Ascending aorta (tissue), 2 donors: ENCODE measurements at regions of chr7 and their contacts with region 1.

Region 1: DNA sequence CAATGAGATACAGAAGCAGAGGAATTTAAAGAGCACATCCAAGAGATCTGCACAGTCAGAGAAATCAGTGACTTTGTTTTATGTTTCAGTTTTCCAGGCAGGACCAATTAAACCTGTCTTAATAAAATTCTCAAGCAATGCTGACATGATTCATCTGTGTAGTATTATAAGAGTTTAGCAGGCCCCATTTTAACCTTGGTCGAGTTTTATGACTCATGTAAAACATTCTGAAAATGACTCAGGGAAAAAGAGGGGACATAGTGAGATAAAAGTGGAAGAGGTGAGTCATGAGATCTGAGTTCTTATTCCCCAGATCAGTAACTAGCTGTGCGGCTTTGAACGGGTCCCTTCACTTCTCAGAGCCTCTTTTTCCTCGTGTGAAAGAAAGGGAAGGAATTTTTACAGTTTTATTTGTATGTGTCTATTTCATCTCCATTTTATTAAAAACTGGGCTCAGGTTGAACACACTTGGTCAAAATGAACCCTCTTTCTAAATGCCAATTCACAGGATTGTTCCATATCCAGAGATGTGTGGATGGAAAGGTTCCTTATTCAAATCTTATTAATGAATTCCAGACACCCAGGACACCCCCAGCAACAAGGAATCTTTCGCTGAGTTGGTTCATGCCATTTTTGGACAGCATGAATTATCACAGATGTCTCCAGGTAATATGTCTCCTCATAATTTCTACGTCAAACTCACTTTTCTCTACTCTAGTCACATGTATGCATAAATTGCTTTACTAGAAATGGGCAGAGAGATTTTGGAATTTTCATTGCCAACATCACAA is 143.2 kb downstream of the JAZF1 start:
- DNase-seq: no peak
- H3K4me3 ChIP-seq: no peak overlapping the region
- H3K27ac ChIP-seq: peak overlapping the region; percentile 56 to 72
- H3K4me1 ChIP-seq: peaks cover 13 to 26% of the 10 kb centered on the region in 2 donors
- H3K27me3 ChIP-seq: no peaks in the 10 kb centered on the region
- CTCF ChIP-seq: no peak

Region 2: DNA sequence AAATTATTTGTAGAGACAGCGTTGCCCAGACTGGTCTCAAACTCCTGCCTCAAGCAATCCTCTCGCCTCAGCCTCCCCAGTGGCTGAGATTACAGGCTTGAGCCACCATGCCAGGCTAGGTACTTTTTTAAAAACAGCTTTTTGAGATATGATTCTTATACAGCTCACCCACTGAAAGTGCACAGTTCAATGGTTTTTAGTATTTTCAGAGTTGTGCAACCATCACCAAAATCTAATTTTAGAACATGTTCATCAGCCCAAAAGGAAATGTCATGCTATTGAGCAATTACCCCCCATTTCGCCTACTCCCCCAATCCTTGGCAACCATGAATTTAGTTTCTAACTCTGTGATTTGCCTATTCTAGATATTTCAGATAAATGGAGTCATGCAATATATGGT is 721.1 kb before region 1 on chr7:
- intact Hi-C with region 1: no loop called
- DNase-seq: no peak
- H3K4me3 ChIP-seq: no peak overlapping the region
- H3K27ac ChIP-seq: no peak overlapping the region
- H3K4me1 ChIP-seq: no peaks in the 10 kb centered on the region
- H3K27me3 ChIP-seq: no peaks in the 10 kb centered on the region
- CTCF ChIP-seq: no peak

Region 3: GRCh38 chr7:27739909-27740448 is 297.4 kb before region 1 on chr7 and contains the start of gene TAX1BP1:
- intact Hi-C with region 1: loop called (anchors 5 kb)
- DNase-seq: peak; percentile 74 to 97
- H3K4me3 ChIP-seq: peak within 1 kb of the TSS; percentile 87 to 97
- H3K27ac ChIP-seq: peak within 1 kb of the TSS; percentile 99
- H3K4me1 ChIP-seq: peaks cover 5 to 20% of the 10 kb centered on the region in 2 donors
- H3K27me3 ChIP-seq: no peaks in the 10 kb centered on the region
- CTCF ChIP-seq: no peak
- total RNA-seq, gene TAX1BP1: 32.6 TPM

Region 4: DNA sequence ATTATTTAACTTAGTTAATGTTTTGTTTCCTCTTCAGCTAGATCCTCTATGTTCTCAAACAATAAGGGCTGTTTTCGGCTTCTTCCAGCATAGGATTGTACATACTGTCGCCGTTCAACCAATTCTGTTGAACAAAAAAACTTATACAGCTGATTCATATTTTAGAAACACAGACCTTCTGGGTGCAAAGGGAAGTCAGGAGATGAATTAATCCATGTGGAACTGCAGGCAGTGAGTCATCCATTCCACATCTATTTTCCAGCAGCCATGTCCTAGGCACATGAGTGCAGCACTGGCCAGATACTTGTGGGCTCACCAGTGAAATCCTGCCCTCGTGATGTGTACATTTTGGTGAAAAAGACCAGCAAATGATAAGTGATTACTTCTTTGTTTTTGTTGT is 20.0 kb before region 1 on chr7:
- intact Hi-C with region 1: no loop called
- DNase-seq: no peak
- H3K4me3 ChIP-seq: no peak overlapping the region
- H3K27ac ChIP-seq: no peak overlapping the region
- H3K4me1 ChIP-seq: peaks cover 5 to 12% of the 10 kb centered on the region in 2 donors
- H3K27me3 ChIP-seq: no peaks in the 10 kb centered on the region
- CTCF ChIP-seq: no peak

Region 5: DNA sequence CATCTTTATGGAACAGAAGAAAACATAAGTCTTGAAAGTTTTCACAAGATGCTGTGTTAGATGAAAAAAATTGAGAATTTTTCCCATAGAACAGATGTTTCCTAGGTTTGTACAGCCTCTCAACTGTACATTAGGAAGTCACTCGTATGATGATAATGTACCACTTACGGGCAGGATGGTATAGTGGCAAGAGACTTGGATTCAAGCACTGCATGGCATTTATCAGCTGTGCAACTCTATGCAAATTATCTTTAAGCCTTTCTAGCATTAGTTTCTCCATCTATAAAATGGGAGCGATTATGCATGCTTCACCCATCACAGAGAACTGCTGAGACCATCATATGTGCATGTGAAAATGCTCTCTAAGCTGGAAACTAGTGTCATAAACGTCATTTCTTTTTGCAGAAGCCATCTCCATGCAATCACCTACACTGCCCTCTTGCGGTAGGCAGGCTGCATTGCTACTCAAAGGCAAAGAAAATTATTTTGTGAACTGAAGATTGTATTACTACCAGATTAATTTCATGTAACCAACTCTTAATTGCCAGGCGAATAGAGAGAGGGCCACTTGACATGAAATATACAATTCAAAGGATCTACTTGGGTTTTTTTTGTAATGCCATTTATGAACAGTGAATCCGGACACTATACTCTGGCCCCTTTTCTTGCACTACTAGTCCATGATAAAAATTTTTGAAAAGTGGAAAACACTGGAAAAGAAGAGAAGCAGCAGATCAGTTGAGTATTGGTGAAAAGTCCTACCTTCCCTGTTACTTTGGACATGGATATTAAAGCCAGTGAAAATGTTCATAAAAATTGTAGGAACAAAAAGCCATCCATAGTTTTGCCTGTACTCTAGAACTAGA is 40.9 kb after region 1 on chr7:
- intact Hi-C with region 1: loop called (anchors 2 kb)
- DNase-seq: no peak
- H3K4me3 ChIP-seq: no peak overlapping the region
- H3K27ac ChIP-seq: no peak overlapping the region
- H3K4me1 ChIP-seq: peaks cover 0 to 9% of the 10 kb centered on the region in 2 donors
- H3K27me3 ChIP-seq: no peaks in the 10 kb centered on the region
- CTCF ChIP-seq: peak; percentile 70 to 95 (median 90)

Region 6: GRCh38 chr7:28179120-28180030 is 142.0 kb after region 1 on chr7:
- intact Hi-C with region 1: loop called (anchors 5 kb)
- DNase-seq: peak in 1 of 2 donors; percentile 85
- H3K4me3 ChIP-seq: peak overlapping the region; percentile 91 to 100
- H3K27ac ChIP-seq: peak overlapping the region; percentile 67 to 89
- H3K4me1 ChIP-seq: peaks cover 0 to 11% of the 10 kb centered on the region in 2 donors
- H3K27me3 ChIP-seq: no peaks in the 10 kb centered on the region
- CTCF ChIP-seq: no peak